ENCODE measurements at regions of chr10 and their contacts with region 1.

Region 1: DNA sequence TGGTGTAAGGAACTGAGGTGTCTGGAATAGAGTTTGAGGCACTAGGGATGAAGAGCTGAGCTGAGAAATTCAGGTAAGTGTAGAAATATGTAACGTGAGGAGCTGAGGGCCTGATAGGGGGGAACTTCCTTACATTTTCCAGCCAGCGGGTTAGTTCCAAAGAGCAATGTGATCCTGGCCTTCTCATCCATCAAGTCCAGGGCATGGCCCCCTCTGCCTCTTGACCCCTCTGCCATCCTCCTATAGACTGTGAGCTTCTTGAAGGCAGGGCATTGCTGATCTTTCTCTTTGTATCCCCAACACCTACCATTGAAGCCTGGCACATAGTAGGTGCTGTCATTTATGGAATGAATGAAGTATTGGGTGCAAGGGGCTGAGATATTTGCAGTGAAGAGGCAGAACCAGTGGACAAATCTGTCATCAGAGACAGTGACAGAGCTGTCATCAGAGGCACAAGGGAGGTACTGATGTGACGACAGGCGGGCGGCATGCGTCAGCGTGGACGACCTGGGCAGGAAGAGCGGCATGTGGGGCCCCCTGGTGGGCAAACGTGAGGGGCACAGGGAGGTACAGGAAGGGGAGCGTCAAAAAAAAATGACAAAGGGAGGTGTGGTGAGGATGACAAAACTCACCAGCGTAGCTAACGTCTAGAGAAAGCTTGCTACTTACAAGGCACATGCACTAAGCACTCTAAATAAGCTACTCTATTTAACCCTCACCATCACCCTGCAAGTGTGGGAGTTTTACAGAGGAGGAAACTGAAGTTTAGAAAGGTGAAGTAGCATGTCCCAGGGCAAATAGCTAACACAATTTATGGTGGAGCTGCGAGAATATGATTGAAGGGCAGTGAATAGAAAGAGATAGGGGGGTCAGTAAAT is 5.2 kb upstream of the CAMK2G start:
- DNase-seq: peak; percentile 78 to 91
- H3K4me3 ChIP-seq: no peak overlapping the region
- H3K27ac ChIP-seq: no peak overlapping the region
- H3K4me1 ChIP-seq: peaks cover 50% of the 10 kb centered on the region
- H3K27me3 ChIP-seq: no peaks in the 10 kb centered on the region
- CTCF ChIP-seq: peak; percentile 93

Region 2: DNA sequence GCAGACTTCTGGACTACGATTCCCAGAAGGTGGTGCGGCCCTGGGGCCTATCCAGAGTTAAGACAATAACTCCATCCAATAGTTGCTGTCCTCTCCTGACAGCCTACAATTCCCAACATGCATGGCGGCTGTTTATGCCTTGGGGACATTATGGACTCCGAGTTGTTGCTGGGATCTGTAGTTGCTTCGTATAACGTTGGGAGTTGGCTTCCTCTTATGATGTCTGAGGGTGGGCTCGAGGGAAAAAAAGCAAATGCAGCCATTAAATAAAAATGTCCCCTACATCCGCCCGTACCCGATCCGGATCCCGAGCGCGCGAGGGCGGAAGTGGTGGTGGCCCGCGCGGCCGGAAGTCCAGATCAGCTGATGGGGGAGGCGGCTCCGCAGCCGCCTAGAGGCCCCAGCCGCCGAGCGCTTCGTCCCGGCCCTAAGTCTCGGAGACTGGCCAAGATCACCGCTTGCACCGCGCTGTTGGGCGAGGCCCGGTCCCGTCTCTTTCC is 94.3 kb before region 1 on chr10 and contains the start of gene ZSWIM8:
- CTCF ChIA-PET with region 1: interaction called, 3 read pairs
- POLR2A ChIA-PET with region 1: no interaction called
- intact Hi-C with region 1: loop called (anchors 5 kb)
- DNase-seq: peak; percentile 80 to 93
- H3K4me3 ChIP-seq: peak within 1 kb of the TSS; percentile 58
- H3K27ac ChIP-seq: 0 out of 2 replicates have a peak within 1 kb of the TSS, but pooled peaks have one; percentile 14
- H3K4me1 ChIP-seq: peaks cover 35% of the 10 kb centered on the region
- H3K27me3 ChIP-seq: no peaks in the 10 kb centered on the region
- CTCF ChIP-seq: no peak
- total RNA-seq, gene ZSWIM8: 49.2 and 70.0 TPM in 2 replicates

Region 3: DNA sequence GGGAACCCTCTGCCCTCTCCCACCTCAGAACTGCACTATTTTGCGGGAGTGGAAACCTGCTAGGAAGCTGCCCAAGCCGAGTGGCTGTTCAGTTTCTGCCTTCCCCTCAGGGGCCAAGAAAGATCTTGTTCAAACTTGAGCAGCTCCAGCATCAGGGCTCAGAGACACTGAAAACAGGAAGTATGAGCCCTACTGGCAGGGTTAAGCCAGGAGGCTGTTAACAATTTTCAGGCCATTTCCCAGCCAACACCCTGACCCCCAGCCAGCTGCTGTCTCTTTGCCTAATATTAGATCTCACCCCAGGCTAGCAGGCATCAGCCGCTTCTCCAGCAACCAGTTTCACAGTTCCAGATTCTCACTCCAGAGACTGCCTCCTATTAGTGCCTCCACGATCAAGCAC is 40.6 kb after region 1 on chr10:
- CTCF ChIA-PET with region 1: no interaction called
- POLR2A ChIA-PET with region 1: no interaction called
- intact Hi-C with region 1: no loop called
- DNase-seq: no peak
- H3K4me3 ChIP-seq: no peak overlapping the region
- H3K27ac ChIP-seq: no peak overlapping the region
- H3K4me1 ChIP-seq: peaks cover 5% of the 10 kb centered on the region; the same call in 1 of the 2 replicates
- H3K27me3 ChIP-seq: no peaks in the 10 kb centered on the region
- CTCF ChIP-seq: no peak

Region 4: GRCh38 chr10:73931767-73932619 is 52.5 kb after region 1 on chr10:
- CTCF ChIA-PET with region 1: interaction called, 11 read pairs
- POLR2A ChIA-PET with region 1: interaction called, 4 read pairs
- intact Hi-C with region 1: no loop called
- DNase-seq: peak; percentile 93 to 99
- H3K4me3 ChIP-seq: peak overlapping the region; percentile 27; the same call in 1 of the 2 replicates
- H3K27ac ChIP-seq: peak overlapping the region; percentile 97
- H3K4me1 ChIP-seq: peaks cover 43% of the 10 kb centered on the region
- H3K27me3 ChIP-seq: no peaks in the 10 kb centered on the region
- CTCF ChIP-seq: no peak

Region 5: DNA sequence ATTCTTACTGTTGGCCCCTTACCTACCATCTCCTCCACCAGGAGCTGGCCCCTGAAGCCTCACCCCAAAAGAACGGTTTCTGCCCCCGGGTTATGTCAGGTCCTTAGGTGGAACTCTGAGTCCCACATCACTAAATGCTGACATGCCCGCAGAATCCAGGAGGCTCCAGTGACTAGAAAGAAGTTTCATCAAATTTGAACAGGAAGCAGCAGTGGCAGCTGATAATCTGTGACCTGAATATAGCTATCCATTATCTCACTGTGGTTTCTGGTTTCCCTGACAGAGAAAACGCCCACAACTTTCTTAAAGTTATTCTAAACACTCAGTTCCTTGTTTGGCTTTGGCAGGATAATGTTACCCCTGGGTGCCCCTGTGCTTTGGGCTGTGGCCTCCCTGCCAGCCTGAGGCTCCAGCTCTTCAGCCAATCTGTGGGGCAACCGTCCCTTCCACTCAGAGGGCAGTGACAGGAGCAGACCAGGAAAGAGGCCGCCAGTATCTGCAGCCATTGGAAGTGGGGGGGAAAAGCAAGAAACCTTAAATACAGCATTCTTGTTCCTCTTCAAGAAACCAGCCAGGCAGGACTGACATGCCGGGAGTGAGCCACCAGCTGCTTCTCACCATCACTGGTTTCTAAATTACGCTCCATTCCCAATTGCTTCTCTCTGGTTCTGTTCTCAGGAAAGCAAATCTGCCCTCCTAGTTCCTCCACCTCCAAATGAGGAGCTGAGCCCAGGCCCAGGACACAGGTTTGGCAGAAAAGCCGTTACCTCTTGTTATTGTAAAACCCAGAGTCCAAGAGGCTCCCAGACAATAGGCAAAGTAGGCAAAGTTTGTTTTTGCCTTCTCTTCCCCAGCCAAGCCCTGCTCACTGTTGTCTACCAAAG is 77.2 kb after region 1 on chr10:
- CTCF ChIA-PET with region 1: interaction called, 12 read pairs
- POLR2A ChIA-PET with region 1: interaction called, 19 read pairs
- intact Hi-C with region 1: no loop called
- DNase-seq: peak; percentile 85 to 95
- H3K4me3 ChIP-seq: peak overlapping the region; percentile 15; the same call in 1 of the 2 replicates
- H3K27ac ChIP-seq: peak overlapping the region; percentile 89
- H3K4me1 ChIP-seq: peaks cover 44% of the 10 kb centered on the region
- H3K27me3 ChIP-seq: no peaks in the 10 kb centered on the region
- CTCF ChIP-seq: no peak

Region 6: GRCh38 chr10:73997787-73998622 is 118.5 kb after region 1 on chr10 and contains the start of gene VCL:
- CTCF ChIA-PET with region 1: no interaction called
- POLR2A ChIA-PET with region 1: interaction called, 29 read pairs
- intact Hi-C with region 1: no loop called
- DNase-seq: peak; percentile 93 to 100
- H3K4me3 ChIP-seq: peak within 1 kb of the TSS; percentile 90
- H3K27ac ChIP-seq: peak within 1 kb of the TSS; percentile 79
- H3K4me1 ChIP-seq: peaks cover 41% of the 10 kb centered on the region
- H3K27me3 ChIP-seq: no peaks in the 10 kb centered on the region
- CTCF ChIP-seq: no peak
- total RNA-seq, gene VCL: 208 and 225 TPM in 2 replicates

Region 7: DNA sequence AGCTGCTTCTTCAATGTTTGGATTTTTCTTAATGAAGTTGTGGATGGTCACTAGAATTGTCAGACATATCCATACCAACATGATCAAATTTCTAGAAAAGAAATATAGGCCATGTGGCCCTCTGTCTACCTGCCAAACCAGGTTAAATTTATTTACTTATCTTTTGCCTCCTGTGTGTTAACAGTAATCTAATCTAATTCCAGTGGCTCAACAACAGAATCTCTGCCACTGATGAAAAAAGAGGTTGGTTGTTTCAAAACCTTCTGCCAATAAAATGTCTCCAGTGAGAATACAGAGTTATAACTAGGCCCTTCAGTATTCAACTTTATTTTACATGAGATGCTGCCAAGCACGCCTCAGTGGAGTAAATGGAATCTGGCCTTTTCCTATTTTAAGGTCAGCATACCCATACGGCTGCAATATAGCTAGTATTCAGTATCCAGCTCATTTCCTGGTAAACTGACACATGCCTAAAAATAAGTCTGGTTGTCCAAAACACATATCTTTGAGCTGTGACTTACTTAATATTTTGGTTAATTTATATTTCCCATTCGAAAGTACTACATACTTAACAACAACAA is 254.8 kb after region 1 on chr10:
- CTCF ChIA-PET with region 1: no interaction called
- POLR2A ChIA-PET with region 1: no interaction called
- intact Hi-C with region 1: no loop called
- DNase-seq: no peak
- H3K4me3 ChIP-seq: no peak overlapping the region
- H3K27ac ChIP-seq: no peak overlapping the region
- H3K4me1 ChIP-seq: no peaks in the 10 kb centered on the region
- H3K27me3 ChIP-seq: no peaks in the 10 kb centered on the region
- CTCF ChIP-seq: no peak

Region 8: DNA sequence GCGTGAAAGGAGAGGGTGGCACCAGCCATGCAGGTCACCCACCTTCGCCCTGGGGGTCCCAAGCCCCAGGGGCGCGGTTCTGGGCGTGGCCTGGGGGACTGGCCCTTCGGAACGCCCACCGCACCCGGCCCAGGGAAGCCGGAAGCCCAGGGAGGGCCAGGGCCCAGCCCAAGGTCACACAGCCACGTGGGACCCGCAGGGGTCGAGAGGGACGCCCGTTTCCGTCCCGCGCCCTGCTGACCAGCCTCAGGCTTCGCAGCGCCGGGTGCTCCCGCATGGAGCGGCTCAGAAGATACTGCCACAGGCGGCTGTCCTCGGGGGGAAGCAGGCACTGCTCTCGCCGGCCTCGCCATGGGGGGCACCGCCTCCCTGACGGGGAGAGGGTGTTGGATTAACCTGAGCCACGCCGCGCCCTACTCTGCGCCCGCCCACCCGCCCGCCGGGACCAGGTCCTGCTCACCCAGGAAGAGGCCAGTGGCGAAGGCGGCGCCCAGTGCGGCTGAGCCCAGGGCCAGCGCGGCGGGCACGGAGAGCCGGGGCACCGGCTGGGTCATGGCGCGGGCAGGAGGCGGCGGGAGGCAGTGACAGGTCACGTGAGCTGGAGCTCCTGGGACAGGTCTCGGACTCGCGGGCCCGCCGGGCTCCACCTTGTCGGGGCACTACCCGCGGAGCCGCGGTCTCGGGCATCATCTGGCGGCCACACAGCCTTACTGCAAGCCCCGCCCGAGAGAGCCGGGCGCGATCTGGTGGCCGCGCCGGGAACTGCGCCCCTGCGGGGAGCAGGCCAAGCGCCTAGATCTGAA is 1356.0 kb after region 1 on chr10 and contains the start of gene COMTD1:
- CTCF ChIA-PET with region 1: no interaction called
- POLR2A ChIA-PET with region 1: no interaction called
- intact Hi-C with region 1: loop called (anchors 10 kb)
- DNase-seq: peak; percentile 83 to 98
- H3K4me3 ChIP-seq: peak within 1 kb of the TSS; percentile 80
- H3K27ac ChIP-seq: peak within 1 kb of the TSS; percentile 86
- H3K4me1 ChIP-seq: peaks cover 37% of the 10 kb centered on the region
- H3K27me3 ChIP-seq: no peaks in the 10 kb centered on the region
- CTCF ChIP-seq: peak; percentile 99
- total RNA-seq, gene COMTD1: 20.5 and 25.1 TPM in 2 replicates